GM12878 (cell line): ENCODE measurements at regions of chr6 and their contacts with region 1.

Region 1: DNA sequence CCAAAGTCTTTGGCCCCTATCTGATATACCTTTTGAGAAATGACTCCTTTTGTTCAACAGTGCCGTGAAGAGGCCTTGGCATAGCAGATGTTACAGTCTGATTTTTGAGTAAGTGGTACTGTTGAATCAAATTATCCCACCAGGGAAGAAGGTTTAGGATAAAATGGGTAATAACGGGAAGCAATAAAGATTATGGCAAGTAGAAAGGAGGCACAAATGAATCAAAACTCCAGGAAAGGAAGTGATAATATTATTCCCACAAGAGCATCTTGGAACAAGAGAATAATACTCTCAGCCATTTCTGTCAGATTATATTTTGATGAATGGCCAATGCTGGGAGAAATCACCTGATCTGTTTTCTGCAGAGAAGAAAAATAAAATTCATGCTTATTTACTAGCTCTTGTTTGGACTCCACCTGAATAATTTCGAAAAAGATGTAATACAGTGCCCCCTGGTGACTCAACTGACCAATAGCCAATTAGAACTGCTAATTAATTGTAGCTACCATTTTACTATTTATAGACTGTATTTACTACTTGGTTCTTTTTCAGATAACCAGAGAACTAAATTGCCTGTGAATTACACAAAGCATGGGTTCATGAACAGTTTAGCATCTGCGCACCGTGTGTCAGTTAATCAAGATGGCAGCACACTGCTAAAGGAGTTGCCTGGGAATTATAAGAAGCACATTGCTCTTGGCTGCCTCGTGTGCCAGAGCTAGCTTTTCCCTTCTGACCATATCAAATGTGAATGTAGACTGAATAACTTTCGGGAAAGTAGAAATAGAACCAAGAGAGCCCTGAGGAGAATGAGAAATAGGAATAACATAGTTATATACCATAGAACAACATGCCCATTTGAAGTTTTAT is 78.5 kb upstream of the TRDN start:
- DNase-seq: no peak
- ATAC-seq: peak; percentile 83
- H3K4me3 ChIP-seq: no peak overlapping the region
- H3K27ac ChIP-seq: no peak overlapping the region
- H3K4me1 ChIP-seq: no peaks in the 10 kb centered on the region
- H3K27me3 ChIP-seq: no peaks in the 10 kb centered on the region
- CTCF ChIP-seq: peak; percentile 46 to 57 (median 50); a peak in 5 of 6 replicates
- EP300 ChIP-seq: no peak
- POLR2A ChIP-seq: no peak
- RAD21 ChIP-seq: peak; percentile 74

Region 2: GRCh38 chr6:123393328-123393727 is 321.9 kb before region 1 on chr6:
- CTCF ChIA-PET with region 1: interaction called, 37 read pairs
- POLR2A ChIA-PET with region 1: no interaction called
- RAD21 ChIA-PET with region 1: interaction called, 12 read pairs
- SMC1A ChIA-PET with region 1: interaction called, 20 read pairs
- in situ Hi-C with region 1: no loop called
- intact Hi-C with region 1: no loop called
- DNase-seq: no peak
- ATAC-seq: 0 out of 3 replicates have a peak, but pooled peaks have one; percentile 27
- H3K4me3 ChIP-seq: no peak overlapping the region
- H3K27ac ChIP-seq: no peak overlapping the region
- H3K4me1 ChIP-seq: no peaks in the 10 kb centered on the region
- H3K27me3 ChIP-seq: no peaks in the 10 kb centered on the region
- CTCF ChIP-seq: peak in 2 of 3 experiments; percentile 12 to 32; a peak in 2 of 6 replicates
- EP300 ChIP-seq: no peak
- POLR2A ChIP-seq: no peak
- RAD21 ChIP-seq: peak; percentile 47; the same call in 1 of the 2 replicates

Region 3: DNA sequence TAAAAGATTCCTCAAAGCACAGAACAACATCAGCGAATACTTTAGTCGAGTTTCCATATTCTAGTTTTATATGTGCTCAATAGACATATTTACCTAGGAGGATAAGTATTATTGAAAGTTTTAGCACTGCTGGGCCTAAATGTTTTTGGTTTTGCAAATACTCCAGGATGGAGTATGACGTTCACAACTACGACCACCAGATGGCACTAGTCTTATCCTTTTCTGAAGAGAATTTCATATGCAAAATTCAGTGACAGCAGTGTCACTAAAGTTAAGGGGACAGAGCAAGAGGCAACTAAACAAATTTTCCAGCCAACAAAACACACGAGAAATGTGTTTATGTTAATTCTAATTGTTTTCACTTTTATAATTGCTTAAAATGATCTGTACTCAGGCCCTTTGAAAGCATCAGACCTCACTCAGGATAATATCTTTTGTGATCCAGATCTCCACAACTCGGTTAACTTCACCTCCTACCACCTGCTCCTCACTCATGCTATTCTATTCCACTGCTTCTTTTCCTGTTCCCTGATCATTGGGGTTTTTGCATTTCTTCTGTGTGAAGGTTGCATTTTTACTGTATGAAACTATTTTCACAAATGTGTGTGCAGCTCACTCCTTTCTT is 299.3 kb before region 1 on chr6:
- CTCF ChIA-PET with region 1: interaction called, 103 read pairs
- POLR2A ChIA-PET with region 1: no interaction called
- RAD21 ChIA-PET with region 1: interaction called, 74 read pairs
- SMC1A ChIA-PET with region 1: interaction called, 71 read pairs
- in situ Hi-C with region 1: loop called (anchors 5 kb)
- intact Hi-C with region 1: loop called (anchors 1 kb)
- DNase-seq: no peak
- ATAC-seq: peak; percentile 85
- H3K4me3 ChIP-seq: no peak overlapping the region
- H3K27ac ChIP-seq: no peak overlapping the region
- H3K4me1 ChIP-seq: no peaks in the 10 kb centered on the region
- H3K27me3 ChIP-seq: no peaks in the 10 kb centered on the region
- CTCF ChIP-seq: peak; percentile 65 to 68 (median 67)
- EP300 ChIP-seq: no peak
- POLR2A ChIP-seq: no peak
- RAD21 ChIP-seq: peak; percentile 79

Region 4: DNA sequence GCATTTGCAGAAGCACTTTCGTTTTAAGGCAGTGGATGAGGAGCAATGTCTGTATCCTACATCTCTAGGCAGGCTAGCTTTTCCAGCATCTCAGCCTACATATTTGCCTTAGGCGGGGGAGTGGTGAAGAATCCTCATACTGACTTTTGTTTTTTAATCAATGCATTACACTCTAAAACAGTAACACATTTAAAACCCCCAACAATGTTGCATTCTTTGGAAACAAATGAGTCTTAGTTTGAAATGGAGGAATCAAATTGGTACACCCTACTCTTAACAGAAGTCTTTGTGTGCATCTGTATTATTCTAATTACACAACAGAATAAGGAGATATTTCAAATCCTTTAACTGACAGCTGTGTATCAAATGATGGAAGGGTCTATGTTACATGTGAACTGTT is 97.4 kb after region 1 on chr6:
- CTCF ChIA-PET with region 1: no interaction called
- POLR2A ChIA-PET with region 1: no interaction called
- RAD21 ChIA-PET with region 1: no interaction called
- SMC1A ChIA-PET with region 1: no interaction called
- in situ Hi-C with region 1: no loop called
- intact Hi-C with region 1: no loop called
- DNase-seq: no peak
- ATAC-seq: no peak
- H3K4me3 ChIP-seq: no peak overlapping the region
- H3K27ac ChIP-seq: no peak overlapping the region
- H3K4me1 ChIP-seq: no peaks in the 10 kb centered on the region
- H3K27me3 ChIP-seq: no peaks in the 10 kb centered on the region
- CTCF ChIP-seq: no peak
- EP300 ChIP-seq: no peak
- POLR2A ChIP-seq: no peak
- RAD21 ChIP-seq: no peak